ENCODE measurements at regions of chr7 and their contacts with region 1.

Region 1: GRCh38 chr7:42770106-42770505 is 141.8 kb downstream of the C7orf25 start:
- DNase-seq: peak; percentile 38
- H3K4me3 ChIP-seq: no peak overlapping the region
- H3K27ac ChIP-seq: no peak overlapping the region
- H3K4me1 ChIP-seq: peaks cover 22% of the 10 kb centered on the region
- H3K27me3 ChIP-seq: no peaks in the 10 kb centered on the region
- CTCF ChIP-seq: no peak

Region 2: DNA sequence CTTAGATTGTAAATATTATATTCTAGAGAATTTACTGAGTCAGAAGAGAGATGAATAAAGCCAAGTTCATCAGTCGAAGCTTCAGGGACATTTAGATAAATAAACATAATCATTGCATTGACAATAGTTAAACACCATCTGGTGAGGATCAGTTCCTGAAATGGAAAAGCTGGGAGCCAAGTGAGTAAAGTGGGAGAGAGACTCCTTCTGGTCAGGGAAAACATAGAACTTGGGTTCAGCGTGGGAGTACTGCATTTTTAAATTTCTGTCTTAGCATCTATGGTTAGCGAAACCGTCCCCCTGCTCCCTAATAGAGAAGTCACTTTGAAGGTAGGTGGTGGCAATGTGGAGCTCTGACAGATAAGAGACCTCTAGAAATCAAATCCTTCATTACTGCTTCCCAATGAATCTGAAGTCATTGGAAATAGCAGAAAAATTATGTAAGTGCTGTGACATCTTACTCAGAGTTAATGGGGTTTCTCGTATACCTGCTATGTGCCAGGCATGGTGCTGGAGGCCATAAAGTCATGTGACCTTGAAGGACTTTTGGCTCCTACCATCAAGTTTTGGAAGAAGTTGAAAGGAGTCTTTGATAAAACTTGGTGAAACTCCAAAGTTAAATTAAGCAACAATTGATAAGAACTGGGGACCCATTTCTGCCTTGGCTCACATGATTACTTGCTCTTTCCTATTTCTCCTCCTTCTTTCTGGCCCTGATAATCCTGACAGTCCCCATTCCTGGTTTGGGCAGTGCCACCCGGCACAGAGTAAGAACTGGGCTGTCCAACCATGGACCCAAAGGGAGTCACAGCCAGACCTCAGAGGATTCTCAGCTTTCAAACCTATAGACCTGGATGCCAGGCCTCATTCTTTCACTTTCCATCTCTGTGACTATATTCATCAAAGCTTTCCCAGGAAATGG is 69.4 kb before region 1 on chr7:
- CTCF ChIA-PET with region 1: no interaction called
- dilution Hi-C with region 1: loop called (anchors 5 kb)
- in situ Hi-C with region 1: no loop called
- intact Hi-C with region 1: no loop called
- DNase-seq: no peak
- H3K4me3 ChIP-seq: no peak overlapping the region
- H3K27ac ChIP-seq: no peak overlapping the region
- H3K4me1 ChIP-seq: no peaks in the 10 kb centered on the region
- H3K27me3 ChIP-seq: no peaks in the 10 kb centered on the region
- CTCF ChIP-seq: no peak

Region 3: GRCh38 chr7:42736931-42737330 is 33.2 kb before region 1 on chr7:
- CTCF ChIA-PET with region 1: no interaction called
- dilution Hi-C with region 1: no loop called
- in situ Hi-C with region 1: no loop called
- intact Hi-C with region 1: loop called (anchors 1 kb)
- DNase-seq: no peak
- H3K4me3 ChIP-seq: no peak overlapping the region
- H3K27ac ChIP-seq: no peak overlapping the region
- H3K4me1 ChIP-seq: no peaks in the 10 kb centered on the region
- H3K27me3 ChIP-seq: no peaks in the 10 kb centered on the region
- CTCF ChIP-seq: peak; percentile 12 to 42

Region 4: DNA sequence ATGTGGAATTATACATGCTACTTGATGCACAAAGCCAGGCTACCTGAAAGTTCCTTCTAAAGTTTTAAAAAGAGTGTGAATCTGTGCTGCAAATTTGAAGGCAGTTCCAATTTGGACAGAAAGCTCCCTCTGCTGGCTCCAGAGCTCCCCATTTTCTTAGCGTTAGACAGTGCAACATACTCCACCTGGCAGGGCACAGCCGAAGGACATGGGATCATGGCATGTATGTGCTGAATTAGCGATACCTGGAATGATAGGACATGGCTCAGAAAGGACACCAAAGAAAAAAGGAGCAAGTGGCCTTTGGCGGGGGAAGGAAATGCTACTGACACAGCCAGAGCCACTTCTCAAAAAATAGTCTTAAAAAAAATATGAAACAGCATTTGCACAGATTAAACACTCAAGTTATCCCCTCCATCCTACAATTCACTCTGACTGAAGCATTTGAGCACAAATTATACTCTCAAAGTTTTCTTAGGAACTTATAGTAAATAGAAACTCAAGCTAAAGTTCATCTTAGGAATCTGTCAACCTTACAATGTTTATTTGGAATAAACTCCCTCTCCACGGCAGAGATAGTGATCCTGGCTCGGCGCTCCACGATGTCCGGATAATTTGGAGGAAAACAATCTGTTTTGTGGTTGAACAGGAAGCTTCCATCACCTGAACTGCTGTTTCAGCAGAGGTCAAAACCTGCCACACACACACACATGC is 61.8 kb after region 1 on chr7:
- CTCF ChIA-PET with region 1: no interaction called
- dilution Hi-C with region 1: loop called (anchors 5 kb)
- in situ Hi-C with region 1: no loop called
- intact Hi-C with region 1: no loop called
- DNase-seq: peak; percentile 30
- H3K4me3 ChIP-seq: no peak overlapping the region
- H3K27ac ChIP-seq: no peak overlapping the region
- H3K4me1 ChIP-seq: no peaks in the 10 kb centered on the region
- H3K27me3 ChIP-seq: no peaks in the 10 kb centered on the region
- CTCF ChIP-seq: peak; percentile 60 to 90

Region 5: DNA sequence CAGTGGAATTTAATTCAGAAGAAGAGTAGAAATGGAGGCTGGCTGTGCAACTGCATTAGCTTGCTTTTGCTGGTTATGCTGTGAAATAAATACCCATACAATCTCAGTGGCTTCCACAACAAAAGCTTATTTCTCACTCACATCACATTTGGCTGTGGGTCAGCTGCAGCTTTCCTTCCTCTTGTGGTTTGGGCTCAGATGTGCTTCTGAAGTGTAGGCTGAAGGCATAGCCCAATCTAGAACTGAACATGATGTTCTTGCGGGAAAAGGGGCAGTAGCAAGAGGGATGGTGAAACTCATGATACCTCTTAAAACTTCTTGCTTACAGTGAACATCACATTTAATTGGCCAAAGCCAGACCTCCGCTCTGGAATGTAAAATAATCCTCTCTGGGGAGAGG is 462.3 kb after region 1 on chr7:
- CTCF ChIA-PET with region 1: no interaction called
- dilution Hi-C with region 1: no loop called
- in situ Hi-C with region 1: no loop called
- intact Hi-C with region 1: no loop called
- DNase-seq: no peak
- H3K4me3 ChIP-seq: no peak overlapping the region
- H3K27ac ChIP-seq: no peak overlapping the region
- H3K4me1 ChIP-seq: no peaks in the 10 kb centered on the region
- H3K27me3 ChIP-seq: no peaks in the 10 kb centered on the region
- CTCF ChIP-seq: no peak

Measured in mammary epithelial cell (primary cell).